GM12878 (cell line): ENCODE measurements at regions of chr22 and their contacts with region 1.

Region 1: DNA sequence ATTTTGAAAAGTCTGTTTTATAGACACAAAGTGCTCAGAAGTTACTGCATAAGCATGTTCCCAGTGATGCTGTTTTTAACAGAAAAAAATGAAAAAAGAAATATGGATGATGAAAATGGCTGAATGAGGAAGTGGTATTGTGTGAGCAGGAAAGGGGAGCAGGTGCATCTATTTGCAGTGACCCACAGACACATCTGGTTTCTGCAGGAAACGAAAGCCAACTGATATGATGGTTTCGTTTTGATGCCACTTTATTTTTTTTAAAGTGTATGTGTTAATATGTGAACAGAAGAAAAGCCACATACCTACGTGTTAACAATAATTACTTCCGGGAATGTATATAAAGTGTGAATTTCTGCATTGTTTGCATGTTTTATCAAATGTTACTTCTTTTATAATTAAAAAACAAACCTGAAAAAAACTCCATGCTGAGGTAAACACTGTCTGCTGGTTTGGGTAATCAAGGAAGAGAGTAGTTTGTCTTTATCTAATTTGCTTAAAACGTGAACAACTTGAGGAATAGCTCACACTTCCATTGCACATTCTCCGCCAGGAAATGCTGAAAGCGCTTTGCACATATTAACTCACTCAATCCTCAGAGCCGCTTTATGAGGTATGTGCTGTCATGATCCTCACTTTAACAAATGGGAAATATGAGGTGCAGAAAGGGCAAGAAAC is 1335.9 kb downstream of the TBC1D22A start:
- DNase-seq: peak; percentile 93
- ATAC-seq: peak; percentile 88
- H3K4me3 ChIP-seq: peak overlapping the region; percentile 4; the same call in 1 of the 2 replicates
- H3K27ac ChIP-seq: peak overlapping the region; percentile 94
- H3K4me1 ChIP-seq: peaks cover 40% of the 10 kb centered on the region
- H3K27me3 ChIP-seq: no peaks in the 10 kb centered on the region
- CTCF ChIP-seq: no peak
- EP300 ChIP-seq: peak; percentile 96 to 98
- POLR2A ChIP-seq: no peak
- RAD21 ChIP-seq: no peak

Region 2: DNA sequence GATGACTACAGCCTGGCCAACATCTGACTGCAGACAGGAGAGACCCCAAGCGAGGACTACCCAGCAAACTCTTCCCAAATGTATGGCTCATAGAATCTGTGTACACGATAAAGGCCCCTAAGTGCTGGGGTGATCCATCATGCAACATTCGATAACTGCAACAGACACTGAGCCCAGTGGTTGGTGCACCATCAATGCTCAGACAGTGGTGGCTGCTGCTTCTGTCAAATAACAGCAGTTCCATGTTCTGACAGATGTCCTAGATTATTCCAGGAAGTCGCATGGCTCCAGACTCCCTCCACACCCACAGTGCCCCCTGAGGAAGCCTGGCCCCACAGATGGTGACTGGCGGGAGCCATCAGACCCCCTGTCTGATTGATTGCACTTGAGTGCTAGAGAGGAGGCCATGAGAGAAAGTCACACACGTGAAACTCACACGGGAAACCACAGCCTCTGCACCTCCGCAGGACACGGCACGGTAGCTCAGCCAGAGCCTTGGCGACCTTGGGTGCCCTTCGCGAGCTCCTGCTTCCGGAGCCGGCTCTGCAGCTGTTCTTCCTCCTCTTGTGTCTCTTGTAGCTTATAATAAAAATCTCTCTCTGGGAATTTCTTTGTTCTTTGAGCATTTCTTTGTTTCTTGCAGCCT is 180.0 kb before region 1 on chr22:
- CTCF ChIA-PET with region 1: no interaction called
- POLR2A ChIA-PET with region 1: no interaction called
- RAD21 ChIA-PET with region 1: no interaction called
- SMC1A ChIA-PET with region 1: no interaction called
- in situ Hi-C with region 1: no loop called
- intact Hi-C with region 1: loop called (anchors 5 kb)
- DNase-seq: peak; percentile 47
- ATAC-seq: peak; percentile 98
- H3K4me3 ChIP-seq: no peak overlapping the region
- H3K27ac ChIP-seq: peak overlapping the region; percentile 59
- H3K4me1 ChIP-seq: peaks cover 17% of the 10 kb centered on the region
- H3K27me3 ChIP-seq: no peaks in the 10 kb centered on the region
- CTCF ChIP-seq: no peak
- EP300 ChIP-seq: peak in 1 of 2 experiments; percentile 32; a peak in 1 of 4 replicates
- POLR2A ChIP-seq: no peak
- RAD21 ChIP-seq: no peak

Region 3: DNA sequence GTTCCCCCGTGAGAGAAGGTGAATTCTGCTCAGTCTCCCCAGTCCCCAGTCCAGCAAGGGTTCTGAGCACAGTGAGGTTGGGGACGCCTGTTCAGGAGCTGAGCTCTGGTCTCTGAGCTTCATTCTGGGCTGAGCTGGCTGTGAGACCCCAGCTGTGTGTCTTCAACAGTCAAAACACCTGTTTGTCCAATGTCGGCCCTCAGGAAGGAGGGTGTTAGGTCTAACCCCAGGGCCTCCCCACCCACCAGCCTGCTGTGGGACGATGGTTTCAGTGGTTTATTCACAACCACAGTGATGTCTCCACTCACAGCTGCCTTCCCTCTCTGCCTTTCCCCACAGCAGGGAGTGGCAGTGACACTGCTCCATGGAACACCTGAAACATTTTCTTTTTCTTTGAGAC is 53.0 kb before region 1 on chr22:
- CTCF ChIA-PET with region 1: no interaction called
- POLR2A ChIA-PET with region 1: no interaction called
- RAD21 ChIA-PET with region 1: no interaction called
- SMC1A ChIA-PET with region 1: interaction called, 4 read pairs
- in situ Hi-C with region 1: no loop called
- intact Hi-C with region 1: loop called (anchors 1 kb)
- DNase-seq: peak; percentile 64
- ATAC-seq: peak; percentile 94
- H3K4me3 ChIP-seq: no peak overlapping the region
- H3K27ac ChIP-seq: peak overlapping the region; percentile 18; the same call in 1 of the 2 replicates
- H3K4me1 ChIP-seq: peaks cover 16% of the 10 kb centered on the region
- H3K27me3 ChIP-seq: no peaks in the 10 kb centered on the region
- CTCF ChIP-seq: no peak
- EP300 ChIP-seq: peak; percentile 42 to 65; a peak in 2 of 4 replicates
- POLR2A ChIP-seq: no peak
- RAD21 ChIP-seq: no peak